AG04450 (cell line): ENCODE measurements at regions of chr14 and their contacts with region 1.

Region 1: GRCh38 chr14:64891839-64892375 is 12.2 kb upstream of the SPTB start:
- DNase-seq: peak; percentile 34
- H3K4me3 ChIP-seq: no peak overlapping the region
- H3K27ac ChIP-seq: no peak overlapping the region
- H3K27me3 ChIP-seq: peaks cover 19% of the 10 kb centered on the region
- CTCF ChIP-seq: peak; percentile 55

Region 2: GRCh38 chr14:64338616-64339316 is 553.1 kb before region 1 on chr14:
- CTCF ChIA-PET with region 1: interaction called, 19 read pairs
- POLR2A ChIA-PET with region 1: no interaction called
- DNase-seq: peak; percentile 95
- H3K4me3 ChIP-seq: peak overlapping the region; percentile 80
- H3K27ac ChIP-seq: peak overlapping the region; percentile 70
- H3K27me3 ChIP-seq: no peaks in the 10 kb centered on the region
- CTCF ChIP-seq: no peak

Region 3: DNA sequence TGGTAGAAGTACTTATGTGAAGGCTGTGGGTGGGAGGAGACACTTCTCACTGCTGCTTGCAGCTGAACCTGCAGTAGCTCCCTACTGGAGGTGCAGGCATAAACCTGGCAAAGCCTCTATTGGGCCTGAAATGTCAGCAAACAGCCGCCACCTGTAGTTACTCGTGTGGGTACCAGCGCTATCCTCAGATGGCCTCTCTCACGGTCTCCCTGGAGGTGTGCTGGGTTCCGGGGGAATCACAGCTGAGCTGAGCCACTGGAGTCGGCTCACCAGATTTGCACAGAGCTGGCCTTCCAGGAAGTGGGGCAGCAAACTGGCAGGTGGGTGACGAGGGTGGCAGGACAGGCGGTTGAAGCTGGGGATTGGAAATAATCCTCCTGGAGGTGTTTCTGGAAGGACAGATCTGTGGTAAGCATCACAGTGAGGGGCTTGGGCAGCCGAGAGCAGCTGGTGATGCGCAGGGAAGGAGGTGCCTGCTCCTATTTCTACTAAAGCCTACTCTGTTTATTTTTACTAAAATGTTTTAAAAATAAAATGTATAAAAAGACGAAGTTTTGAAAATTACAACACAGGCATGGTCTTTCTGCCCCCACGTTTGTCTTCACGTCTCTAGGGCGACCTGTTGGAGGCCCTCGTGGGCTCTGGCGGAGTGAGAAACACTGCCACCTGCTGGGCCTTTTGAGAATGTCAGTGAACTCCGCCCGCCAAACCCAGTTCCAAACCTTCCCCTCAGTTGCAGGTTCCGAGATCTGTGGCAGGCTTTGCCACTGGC is 255.5 kb before region 1 on chr14:
- CTCF ChIA-PET with region 1: interaction called, 22 read pairs
- POLR2A ChIA-PET with region 1: no interaction called
- DNase-seq: no peak
- H3K4me3 ChIP-seq: no peak overlapping the region
- H3K27ac ChIP-seq: peak overlapping the region; percentile 11
- H3K27me3 ChIP-seq: no peaks in the 10 kb centered on the region
- CTCF ChIP-seq: peak; percentile 84

Region 4: DNA sequence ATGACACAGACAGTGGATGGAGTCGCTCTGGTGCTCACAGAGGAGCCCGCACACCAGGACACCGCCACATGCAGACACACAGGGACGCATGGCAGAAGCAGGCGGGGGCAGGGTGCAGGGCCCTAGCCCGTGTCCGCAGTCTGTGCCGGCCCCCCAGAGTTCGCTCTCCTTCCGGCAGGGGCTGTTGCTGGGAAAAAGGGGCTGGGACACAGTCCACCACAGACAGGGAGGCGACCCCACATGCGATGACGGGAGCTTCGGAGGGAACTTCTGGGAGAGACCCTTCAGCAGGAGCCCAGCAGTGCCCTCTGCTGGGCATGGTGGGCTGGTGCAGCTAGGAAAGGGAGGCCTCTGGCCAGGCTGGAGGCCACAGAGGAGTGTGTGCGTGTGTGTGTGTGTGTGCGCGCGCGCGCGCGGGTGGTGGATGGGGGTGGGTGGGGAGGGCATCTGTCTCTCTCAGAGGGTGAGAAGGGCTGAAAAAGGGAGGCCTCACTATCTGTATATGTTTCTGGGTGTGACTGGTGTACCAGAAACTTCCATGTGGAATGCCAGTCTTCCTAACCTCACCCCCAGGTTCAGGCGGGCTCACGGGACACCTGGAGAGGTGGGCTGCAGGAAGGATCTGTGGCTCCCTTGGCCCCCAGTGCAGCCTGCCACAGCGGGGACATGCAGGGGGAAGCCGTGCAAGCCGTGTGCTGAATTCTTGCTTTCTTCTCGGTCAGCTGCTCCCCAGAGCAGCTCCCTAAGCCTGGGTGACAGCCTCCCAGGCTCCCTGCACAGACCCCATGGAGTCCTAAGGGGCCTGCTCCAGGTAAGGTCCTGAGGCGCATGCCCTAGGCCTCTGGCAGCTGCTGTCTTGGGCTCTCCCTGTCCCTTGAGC is 127.0 kb before region 1 on chr14:
- CTCF ChIA-PET with region 1: interaction called, 20 read pairs
- POLR2A ChIA-PET with region 1: no interaction called
- DNase-seq: peak; percentile 49
- H3K4me3 ChIP-seq: peak overlapping the region; percentile 35; the same call in 1 of the 2 replicates
- H3K27ac ChIP-seq: no peak overlapping the region
- H3K27me3 ChIP-seq: peaks cover 10% of the 10 kb centered on the region
- CTCF ChIP-seq: peak; percentile 93

Region 5: GRCh38 chr14:64823305-64823861 is 68.5 kb before region 1 on chr14:
- CTCF ChIA-PET with region 1: interaction called, 159 read pairs
- POLR2A ChIA-PET with region 1: no interaction called
- DNase-seq: no peak
- H3K4me3 ChIP-seq: no peak overlapping the region
- H3K27ac ChIP-seq: no peak overlapping the region
- H3K27me3 ChIP-seq: peaks cover 35% of the 10 kb centered on the region
- CTCF ChIP-seq: peak; percentile 84

Region 6: DNA sequence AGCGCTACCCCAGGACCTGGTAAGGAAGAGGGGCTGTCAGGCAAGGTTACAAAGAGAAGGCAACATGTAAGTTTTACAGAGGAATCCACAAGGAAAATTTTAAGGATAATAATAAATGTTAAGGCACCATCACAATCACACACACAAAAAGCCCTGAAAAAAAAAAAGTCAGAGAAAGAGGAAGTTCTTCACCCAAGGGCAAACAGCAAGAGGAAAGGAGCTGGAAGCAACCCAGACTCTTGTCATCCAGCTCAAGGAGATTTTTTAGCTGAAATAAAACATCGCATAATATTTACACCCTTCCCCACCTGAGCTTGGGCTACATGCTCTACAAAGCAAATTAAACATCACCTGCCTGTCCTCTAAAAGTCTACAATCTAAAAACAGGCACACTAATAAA is 21.7 kb before region 1 on chr14:
- CTCF ChIA-PET with region 1: interaction called, 10 read pairs
- POLR2A ChIA-PET with region 1: no interaction called
- DNase-seq: no peak
- H3K4me3 ChIP-seq: no peak overlapping the region
- H3K27ac ChIP-seq: no peak overlapping the region
- H3K27me3 ChIP-seq: peaks cover 38% of the 10 kb centered on the region
- CTCF ChIP-seq: no peak

Region 7: DNA sequence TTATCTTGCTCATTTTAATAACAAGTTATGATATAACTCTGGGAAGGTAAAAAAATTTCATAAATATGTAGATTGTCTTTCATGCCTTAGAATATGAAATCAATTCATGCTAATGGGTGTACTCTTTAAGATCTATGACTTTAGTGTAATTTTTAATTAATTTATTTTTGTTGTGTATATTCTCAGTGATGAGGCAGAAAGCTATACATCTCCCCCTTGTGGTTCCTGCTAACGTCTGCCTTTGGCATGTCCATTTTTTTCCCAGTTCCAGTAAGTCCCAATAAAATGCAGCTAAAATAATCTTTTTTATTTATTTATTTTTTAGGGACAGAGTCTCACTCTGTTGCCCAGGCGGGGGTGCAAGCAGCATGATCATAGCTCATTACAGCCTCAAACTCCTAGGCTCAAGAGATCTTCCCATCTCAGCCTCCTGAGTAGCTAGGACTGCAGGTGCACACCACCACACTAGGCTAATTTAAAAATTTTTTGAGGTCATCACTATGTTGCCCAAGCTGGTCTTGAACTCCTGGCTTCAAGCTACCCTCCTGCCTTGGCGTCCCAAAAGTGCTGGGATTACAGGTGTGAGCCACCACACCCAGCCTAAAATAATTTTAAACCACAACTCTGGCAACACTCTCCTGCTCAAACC is 19.1 kb after region 1 on chr14:
- CTCF ChIA-PET with region 1: interaction called, 17 read pairs
- POLR2A ChIA-PET with region 1: interaction called, 7 read pairs
- DNase-seq: peak; percentile 13
- H3K4me3 ChIP-seq: no peak overlapping the region
- H3K27ac ChIP-seq: no peak overlapping the region
- H3K27me3 ChIP-seq: peaks cover 11% of the 10 kb centered on the region
- CTCF ChIP-seq: peak; percentile 84